ENCODE measurements at regions of chr11 and their contacts with region 1.

Region 1: GRCh38 chr11:128157423-128158298 is 429.7 kb downstream of the ETS1 start:
- DNase-seq: peak in 1 of 2 donors; percentile 66
- H3K4me3 ChIP-seq: peak overlapping the region in 1 of 2 donors; percentile 35
- H3K27ac ChIP-seq: no peak overlapping the region
- H3K4me1 ChIP-seq: peaks cover 0 to under 1% of the 10 kb centered on the region in 2 donors
- H3K27me3 ChIP-seq: no peaks in the 10 kb centered on the region
- CTCF ChIP-seq: peak; percentile 76 to 81 (median 80)

Region 2: GRCh38 chr11:128039140-128040021 is 118.3 kb before region 1 on chr11:
- intact Hi-C with region 1: loop called (anchors 5 kb)
- DNase-seq: peak in 1 of 2 donors; percentile 25
- H3K4me3 ChIP-seq: no peak overlapping the region
- H3K27ac ChIP-seq: no peak overlapping the region
- H3K4me1 ChIP-seq: no peaks in the 10 kb centered on the region
- H3K27me3 ChIP-seq: no peaks in the 10 kb centered on the region
- CTCF ChIP-seq: no peak

Region 3: GRCh38 chr11:129023970-129024676 is 866.5 kb after region 1 on chr11:
- intact Hi-C with region 1: no loop called
- DNase-seq: no peak
- H3K4me3 ChIP-seq: no peak overlapping the region
- H3K27ac ChIP-seq: no peak overlapping the region
- H3K4me1 ChIP-seq: peaks cover 0 to 12% of the 10 kb centered on the region in 2 donors
- H3K27me3 ChIP-seq: no peaks in the 10 kb centered on the region
- CTCF ChIP-seq: no peak